ENCODE measurements at regions of chr15 and their contacts with region 1.

Region 1: DNA sequence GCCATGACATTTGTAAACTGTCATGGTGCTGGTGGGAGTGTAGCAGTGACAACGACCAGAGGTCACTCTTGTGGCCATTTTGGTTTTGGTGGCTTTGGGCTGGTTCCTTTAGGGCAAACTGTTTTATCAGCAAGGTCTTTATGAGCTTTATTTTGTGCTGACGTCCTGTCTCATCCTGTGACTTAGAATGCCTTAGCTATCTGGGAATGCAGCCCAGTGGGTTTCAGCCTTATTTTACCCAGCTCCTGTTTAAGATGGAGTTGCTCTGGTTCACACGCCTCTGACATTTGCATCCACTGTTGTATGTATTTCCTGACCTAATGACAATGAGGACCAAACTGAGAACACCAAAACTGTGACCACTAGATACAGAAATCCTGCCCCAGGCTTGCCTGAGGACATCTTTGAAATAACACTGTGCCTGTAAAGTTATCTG is 37.6 kb downstream of the RAB8B start:
- DNase-seq: no peak
- ATAC-seq: peak; percentile 16
- H3K4me3 ChIP-seq: no peak overlapping the region
- H3K4me3 Mint-ChIP-seq: peak overlapping the region in 4 of 10 donors; percentile 7 to 72 (median 48)
- H3K27ac ChIP-seq: peak overlapping the region; percentile 49
- H3K27ac Mint-ChIP-seq: peak overlapping the region; percentile 3 to 92 (median 78)
- H3K4me1 ChIP-seq: peaks cover 10 to 16% of the 10 kb centered on the region in 2 donors
- H3K4me1 Mint-ChIP-seq: peaks cover 26 to 83% (median 82%) of the 10 kb centered on the region in 7 donors
- H3K27me3 ChIP-seq: no peaks in the 10 kb centered on the region
- H3K27me3 Mint-ChIP-seq: no peaks in the 10 kb centered on the region

Region 2: GRCh38 chr15:62845241-62846133 is 381.5 kb before region 1 on chr15:
- CTCF ChIA-PET with region 1: no interaction called
- POLR2A ChIA-PET with region 1: no interaction called
- intact Hi-C with region 1: no loop called
- DNase-seq: no peak
- ATAC-seq: no peak
- H3K4me3 ChIP-seq: no peak overlapping the region
- H3K4me3 Mint-ChIP-seq: no peak overlapping the region
- H3K27ac ChIP-seq: no peak overlapping the region
- H3K27ac Mint-ChIP-seq: no peak overlapping the region
- H3K4me1 ChIP-seq: no peaks in the 10 kb centered on the region
- H3K4me1 Mint-ChIP-seq: no peaks in the 10 kb centered on the region
- H3K27me3 ChIP-seq: no peaks in the 10 kb centered on the region
- H3K27me3 Mint-ChIP-seq: peaks cover 0 to 14% (median 9%) of the 10 kb centered on the region in 5 donors

Region 3: DNA sequence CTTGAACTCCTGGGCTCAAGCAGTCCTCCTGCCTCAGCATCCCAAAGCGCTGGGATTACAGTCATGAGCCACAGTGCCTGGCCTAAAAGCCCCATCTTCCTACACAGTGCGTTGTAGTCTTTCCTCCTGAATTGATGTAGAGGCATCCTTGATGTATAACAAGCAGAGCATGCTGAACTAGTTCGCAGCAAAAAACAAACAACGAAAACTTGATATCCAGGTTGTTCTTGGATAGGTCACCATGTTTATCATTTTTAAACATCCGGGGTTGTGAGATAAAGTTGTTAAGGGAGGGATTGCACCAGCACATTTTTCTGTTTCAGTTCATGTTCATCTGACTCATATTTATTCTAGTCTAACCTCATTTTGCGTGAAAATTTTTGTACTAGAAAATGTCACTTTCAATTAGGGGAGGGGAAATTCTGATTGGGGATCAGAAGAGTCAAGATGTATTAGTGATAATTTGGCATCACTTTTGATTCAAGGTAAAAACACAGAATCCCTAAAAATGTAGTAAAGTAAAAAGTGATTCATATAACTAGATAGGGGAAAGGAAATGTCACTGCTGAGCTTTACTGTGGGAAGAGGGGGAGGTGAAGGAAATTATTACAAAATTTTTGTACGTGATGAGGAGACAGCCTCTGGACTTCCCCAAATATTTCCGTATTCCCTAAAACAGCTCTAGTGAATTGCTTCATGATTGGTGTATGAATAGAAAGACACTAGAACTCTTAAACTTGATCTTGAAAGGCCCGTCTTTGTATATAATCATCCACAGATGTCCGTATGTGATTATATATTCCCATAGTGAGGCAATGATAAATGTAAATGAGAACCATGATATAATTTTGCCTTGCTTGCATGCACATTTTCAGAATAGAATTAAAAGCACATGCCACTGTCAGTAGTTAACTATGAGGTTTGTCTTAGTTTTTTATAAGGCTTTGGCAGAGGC is 14.7 kb before region 1 on chr15:
- CTCF ChIA-PET with region 1: no interaction called
- POLR2A ChIA-PET with region 1: interaction called, 6 read pairs
- intact Hi-C with region 1: loop called in 1 of 2 experiments (anchors 2 kb)
- DNase-seq: no peak
- ATAC-seq: peak; percentile 60
- H3K4me3 ChIP-seq: no peak overlapping the region
- H3K4me3 Mint-ChIP-seq: peak overlapping the region in 9 of 10 donors; percentile 22 to 78 (median 58)
- H3K27ac ChIP-seq: no peak overlapping the region
- H3K27ac Mint-ChIP-seq: peak overlapping the region; percentile 0 to 91 (median 77)
- H3K4me1 ChIP-seq: peaks cover 46 to 52% of the 10 kb centered on the region in 2 donors
- H3K4me1 Mint-ChIP-seq: peaks cover 59 to 92% (median 82%) of the 10 kb centered on the region in 7 donors
- H3K27me3 ChIP-seq: no peaks in the 10 kb centered on the region
- H3K27me3 Mint-ChIP-seq: no peaks in the 10 kb centered on the region

Region 4: DNA sequence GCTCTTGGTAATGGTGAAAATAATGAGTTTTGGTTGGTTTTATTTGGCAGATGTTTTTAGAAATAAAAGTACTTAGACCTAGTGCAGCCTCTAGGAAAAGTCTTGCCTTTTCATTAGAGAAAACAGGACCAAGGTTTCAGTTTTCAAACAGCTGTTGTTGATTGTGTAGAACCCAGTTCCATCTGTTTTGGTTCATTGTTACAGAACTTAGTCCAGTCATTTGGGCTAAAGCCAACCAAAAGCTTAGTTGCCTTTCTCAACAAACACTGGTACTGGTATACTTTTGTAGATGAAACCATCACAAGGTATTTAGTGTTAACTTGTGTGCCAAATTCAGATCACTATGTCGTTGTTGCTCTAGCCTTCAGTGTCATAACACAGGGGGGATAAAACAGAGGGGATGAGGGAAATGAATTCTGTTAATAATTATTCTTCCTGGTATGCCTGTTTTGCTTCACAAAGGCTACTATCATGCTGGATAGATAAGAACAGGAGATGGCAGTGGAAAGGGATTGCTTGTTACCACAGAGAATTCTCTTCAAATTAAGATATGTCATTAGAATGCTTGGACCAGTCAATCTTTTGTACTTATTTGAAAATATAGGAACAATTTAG is 37.8 kb after region 1 on chr15:
- CTCF ChIA-PET with region 1: no interaction called
- POLR2A ChIA-PET with region 1: no interaction called
- intact Hi-C with region 1: loop called in 1 of 2 experiments (anchors 5 kb)
- DNase-seq: no peak
- ATAC-seq: no peak
- H3K4me3 ChIP-seq: no peak overlapping the region
- H3K4me3 Mint-ChIP-seq: no peak overlapping the region
- H3K27ac ChIP-seq: no peak overlapping the region
- H3K27ac Mint-ChIP-seq: peak overlapping the region in 4 of 9 donors; percentile 3 to 43 (median 19)
- H3K4me1 ChIP-seq: no peaks in the 10 kb centered on the region
- H3K4me1 Mint-ChIP-seq: peaks cover 0 to 11% (median 6%) of the 10 kb centered on the region in 7 donors
- H3K27me3 ChIP-seq: no peaks in the 10 kb centered on the region
- H3K27me3 Mint-ChIP-seq: no peaks in the 10 kb centered on the region

Region 5: GRCh38 chr15:63318344-63318743 is 91.4 kb after region 1 on chr15:
- CTCF ChIA-PET with region 1: no interaction called
- POLR2A ChIA-PET with region 1: no interaction called
- intact Hi-C with region 1: no loop called
- DNase-seq: no peak
- ATAC-seq: no peak
- H3K4me3 ChIP-seq: no peak overlapping the region
- H3K4me3 Mint-ChIP-seq: no peak overlapping the region
- H3K27ac ChIP-seq: no peak overlapping the region
- H3K27ac Mint-ChIP-seq: peak overlapping the region in 1 of 9 donors; percentile 30
- H3K4me1 ChIP-seq: no peaks in the 10 kb centered on the region
- H3K4me1 Mint-ChIP-seq: no peaks in the 10 kb centered on the region
- H3K27me3 ChIP-seq: no peaks in the 10 kb centered on the region
- H3K27me3 Mint-ChIP-seq: peaks cover 0 to 22% (median 0%) of the 10 kb centered on the region in 5 donors

Region 6: GRCh38 chr15:63531586-63531985 is 304.6 kb after region 1 on chr15:
- CTCF ChIA-PET with region 1: no interaction called
- POLR2A ChIA-PET with region 1: no interaction called
- intact Hi-C with region 1: no loop called
- DNase-seq: no peak
- ATAC-seq: peak; percentile 61
- H3K4me3 ChIP-seq: no peak overlapping the region
- H3K4me3 Mint-ChIP-seq: peak overlapping the region in 6 of 10 donors; percentile 5 to 49 (median 16)
- H3K27ac ChIP-seq: no peak overlapping the region
- H3K27ac Mint-ChIP-seq: peak overlapping the region in 6 of 9 donors; percentile 21 to 71 (median 36)
- H3K4me1 ChIP-seq: peaks cover 12 to 48% of the 10 kb centered on the region in 2 donors
- H3K4me1 Mint-ChIP-seq: peaks cover 53 to 95% (median 93%) of the 10 kb centered on the region in 7 donors
- H3K27me3 ChIP-seq: no peaks in the 10 kb centered on the region
- H3K27me3 Mint-ChIP-seq: no peaks in the 10 kb centered on the region

Region 7: GRCh38 chr15:63610200-63610841 is 383.3 kb after region 1 on chr15:
- CTCF ChIA-PET with region 1: no interaction called
- POLR2A ChIA-PET with region 1: no interaction called
- intact Hi-C with region 1: no loop called
- DNase-seq: peak in 8 of 9 donors; percentile 43 to 71 (median 64)
- ATAC-seq: peak; percentile 94
- H3K4me3 ChIP-seq: no peak overlapping the region
- H3K4me3 Mint-ChIP-seq: peak overlapping the region in 7 of 10 donors; percentile 9 to 68 (median 42)
- H3K27ac ChIP-seq: peak overlapping the region; percentile 69
- H3K27ac Mint-ChIP-seq: peak overlapping the region; percentile 74 to 94 (median 84)
- H3K4me1 ChIP-seq: peaks cover 23 to 25% of the 10 kb centered on the region in 2 donors
- H3K4me1 Mint-ChIP-seq: peaks cover 23 to 51% (median 41%) of the 10 kb centered on the region in 7 donors
- H3K27me3 ChIP-seq: no peaks in the 10 kb centered on the region
- H3K27me3 Mint-ChIP-seq: no peaks in the 10 kb centered on the region

Measured in naive thymus-derived CD4-positive, alpha-beta T cell (primary cell).